ENCODE measurements at regions of chr19 and their contacts with region 1.

Region 1: DNA sequence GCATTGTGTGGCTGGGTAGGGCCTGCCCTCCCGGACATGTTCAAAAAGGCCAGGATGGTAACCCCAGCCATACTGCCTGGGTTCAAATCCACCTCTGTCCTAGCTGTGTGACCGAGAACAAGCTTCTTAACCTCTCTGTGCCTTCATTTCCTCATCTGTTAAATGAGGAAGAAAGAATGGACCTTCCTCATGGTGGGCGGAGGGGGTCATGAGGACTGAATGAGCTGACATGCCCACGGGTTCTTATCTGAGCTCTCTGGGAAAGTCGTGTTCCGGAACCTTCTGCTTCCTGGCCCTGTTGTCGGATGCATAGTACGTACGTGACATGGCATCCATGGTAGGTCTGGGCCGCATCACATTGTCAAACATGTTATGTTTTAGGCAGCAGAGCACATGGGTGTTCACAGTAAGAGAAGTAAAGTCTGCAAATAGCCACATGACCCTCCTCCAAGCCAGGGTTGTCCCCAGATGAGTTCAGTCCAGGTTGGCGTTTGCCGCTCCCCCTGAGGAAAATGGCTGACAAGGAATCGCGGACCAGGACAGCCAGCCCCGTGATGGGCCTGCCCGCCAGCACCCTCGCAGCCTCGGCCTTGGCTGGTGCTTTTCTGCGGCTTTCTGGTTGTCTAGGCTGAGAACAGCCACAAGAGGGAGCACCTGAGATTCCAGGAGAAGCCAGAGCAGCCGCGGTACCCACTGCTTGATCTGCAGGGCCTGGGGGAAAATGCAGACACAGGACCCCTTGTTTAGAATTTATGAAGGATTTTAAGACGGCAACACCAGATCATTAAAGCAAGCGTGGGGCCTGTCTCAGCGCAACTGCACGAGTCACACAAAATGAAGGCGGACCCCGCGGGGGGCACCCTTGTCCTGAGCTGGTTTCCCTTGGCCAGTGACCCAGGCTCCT is 2.4 kb upstream of the NTN5 start:
- DNase-seq: peak; percentile 71 to 72
- H3K4me3 ChIP-seq: no peak overlapping the region
- H3K27ac ChIP-seq: no peak overlapping the region
- H3K4me1 ChIP-seq: peaks cover 32% of the 10 kb centered on the region
- H3K27me3 ChIP-seq: no peaks in the 10 kb centered on the region
- CTCF ChIP-seq: peak; percentile 92

Region 2: DNA sequence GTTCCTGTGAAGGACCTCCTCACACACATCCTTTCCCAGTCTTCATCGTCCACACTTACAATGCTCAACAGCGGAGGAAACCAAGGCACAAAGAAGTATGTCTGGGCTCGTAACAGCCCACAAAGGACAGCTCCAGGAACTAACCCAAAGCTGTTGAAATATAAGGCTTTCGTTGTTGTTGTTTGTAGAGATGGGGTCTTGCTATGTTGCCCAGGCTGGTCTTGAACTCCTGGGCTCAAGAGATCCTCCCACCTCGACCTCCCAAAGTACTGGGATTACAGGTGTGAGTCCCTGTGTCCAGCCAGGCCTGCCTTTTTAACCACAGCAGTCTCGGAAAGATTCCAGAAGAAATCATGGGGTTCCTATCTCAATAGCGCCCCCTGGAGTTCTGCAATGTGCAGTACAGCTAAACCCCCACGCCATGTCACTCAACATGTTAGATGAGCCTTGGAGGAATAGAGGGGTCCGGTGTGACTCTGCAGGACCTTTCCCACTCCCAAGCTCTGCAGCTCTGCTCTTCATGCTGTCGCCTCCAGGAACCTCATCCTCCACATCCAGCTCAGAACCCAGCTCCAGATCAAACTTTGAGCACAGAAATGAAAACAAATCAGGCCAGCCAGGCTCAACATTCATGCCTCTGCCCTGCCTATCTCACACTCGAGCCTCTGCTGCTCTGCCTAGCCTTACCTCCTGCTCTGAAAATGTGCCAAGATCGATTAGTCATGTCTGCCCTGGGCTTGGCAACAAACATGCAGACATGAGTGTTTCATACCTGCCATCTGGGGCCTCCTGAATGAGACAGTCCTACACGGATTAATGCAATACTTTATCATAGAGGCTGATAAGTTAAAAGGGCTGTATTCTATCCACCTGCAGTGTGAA is 572.1 kb before region 1 on chr19:
- CTCF ChIA-PET with region 1: no interaction called
- POLR2A ChIA-PET with region 1: no interaction called
- intact Hi-C with region 1: no loop called
- DNase-seq: peak; percentile 31 to 61
- H3K4me3 ChIP-seq: no peak overlapping the region
- H3K27ac ChIP-seq: no peak overlapping the region
- H3K4me1 ChIP-seq: no peaks in the 10 kb centered on the region
- H3K27me3 ChIP-seq: no peaks in the 10 kb centered on the region; the same call in 1 of the 2 replicates
- CTCF ChIP-seq: peak; percentile 93

Region 3: DNA sequence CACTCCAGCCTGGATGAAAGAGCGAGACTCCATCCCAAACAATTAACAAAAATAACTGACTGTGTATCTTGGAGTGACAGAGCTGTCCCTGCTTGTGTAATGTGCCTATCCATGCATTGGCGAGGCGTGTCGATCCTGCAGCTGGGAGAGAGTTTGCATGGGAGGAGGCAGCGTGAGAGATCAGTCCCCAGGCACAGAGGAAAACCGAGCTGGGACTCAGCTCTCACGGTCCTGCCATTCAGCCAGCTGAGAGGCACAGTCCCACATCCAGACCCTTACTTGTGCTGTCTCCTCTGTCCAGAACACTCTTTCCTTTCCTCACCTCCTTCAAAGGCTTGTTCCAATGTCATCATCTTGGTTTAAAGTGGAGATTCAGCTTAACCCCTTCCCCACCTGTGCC is 135.1 kb before region 1 on chr19:
- CTCF ChIA-PET with region 1: no interaction called
- POLR2A ChIA-PET with region 1: no interaction called
- intact Hi-C with region 1: no loop called
- DNase-seq: no peak
- H3K4me3 ChIP-seq: no peak overlapping the region
- H3K27ac ChIP-seq: no peak overlapping the region
- H3K4me1 ChIP-seq: peaks cover 22% of the 10 kb centered on the region
- H3K27me3 ChIP-seq: no peaks in the 10 kb centered on the region
- CTCF ChIP-seq: no peak

Region 4: DNA sequence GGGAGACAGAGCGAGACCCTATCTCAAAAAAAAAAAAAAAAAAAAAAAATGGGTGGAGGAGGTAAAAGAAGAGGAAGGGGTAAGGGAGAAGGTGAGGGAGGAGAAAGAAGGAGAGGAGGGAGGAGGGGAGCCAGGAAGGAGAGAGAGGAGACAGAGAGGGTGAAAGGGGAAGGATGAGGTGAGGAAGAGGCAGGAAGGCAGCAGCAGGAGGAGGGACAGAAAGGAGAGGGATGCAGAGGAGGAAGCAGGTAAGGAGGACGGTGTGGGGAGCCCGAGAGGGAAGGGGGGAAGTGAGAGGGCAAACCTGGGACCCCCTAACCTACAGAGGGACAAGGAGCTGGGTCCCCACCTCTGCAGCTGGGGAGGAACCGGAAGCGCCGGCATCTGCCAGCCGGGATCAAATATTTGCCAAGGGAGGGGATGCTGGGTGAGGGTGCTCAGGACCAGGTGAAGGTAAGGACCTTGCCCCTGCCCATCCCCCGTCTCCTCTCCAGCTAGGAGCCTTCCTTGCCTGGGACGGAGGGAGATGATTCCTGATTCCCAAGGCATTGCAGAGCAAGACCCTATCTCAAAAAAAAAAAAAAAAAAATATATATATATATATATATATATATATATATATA is 72.9 kb before region 1 on chr19:
- CTCF ChIA-PET with region 1: no interaction called
- POLR2A ChIA-PET with region 1: interaction called, 10 read pairs
- intact Hi-C with region 1: no loop called
- DNase-seq: peak in 1 of 2 experiments; percentile 8
- H3K4me3 ChIP-seq: no peak overlapping the region
- H3K27ac ChIP-seq: no peak overlapping the region
- H3K4me1 ChIP-seq: 0 out of 2 replicates have a peak, but pooled peaks cover 5% of the 10 kb centered on the region
- H3K27me3 ChIP-seq: no peaks in the 10 kb centered on the region
- CTCF ChIP-seq: no peak

Region 5: DNA sequence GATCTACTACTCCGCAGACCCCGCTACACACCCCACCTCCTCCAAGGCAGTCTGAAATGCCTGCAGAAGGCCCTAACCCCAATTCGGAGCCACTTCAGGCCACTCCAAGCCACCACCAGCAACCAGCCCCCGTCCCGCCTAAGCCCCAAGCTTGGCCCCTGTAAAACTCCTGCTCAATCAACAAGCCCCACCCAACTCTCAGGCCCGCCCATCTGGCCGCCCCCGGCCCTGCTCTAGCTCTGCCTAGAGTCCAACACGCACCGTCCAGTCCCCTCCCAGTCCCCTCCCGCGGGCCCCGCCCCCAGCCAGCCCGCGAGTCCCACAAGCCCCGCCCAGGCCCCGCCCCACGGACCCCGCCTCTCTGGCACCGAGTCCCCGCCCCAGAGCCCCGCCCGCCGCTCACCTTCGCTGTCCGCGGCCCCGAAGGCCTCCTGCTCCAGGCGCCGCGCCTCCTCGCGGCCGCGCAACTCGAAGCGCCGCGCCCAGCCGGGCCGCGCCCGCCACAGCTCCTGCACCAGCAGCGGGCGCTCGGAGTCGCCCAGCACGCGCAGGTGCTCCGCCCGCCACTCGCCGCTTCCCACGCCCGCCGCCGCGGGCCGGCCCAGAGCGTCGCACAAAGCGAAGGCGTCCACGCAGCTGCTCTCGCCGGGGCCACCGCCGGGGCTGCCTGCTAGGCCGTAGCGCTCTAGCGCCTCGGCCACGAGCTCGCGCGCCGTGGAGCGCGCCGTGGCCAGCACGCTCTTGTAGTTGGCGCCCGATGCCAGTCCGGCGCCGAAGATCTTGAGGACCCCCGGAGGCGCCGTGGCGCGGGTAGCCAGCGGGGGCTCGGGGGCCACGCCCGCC is 63.6 kb after region 1 on chr19:
- CTCF ChIA-PET with region 1: interaction called, 4 read pairs
- POLR2A ChIA-PET with region 1: interaction called, 3 read pairs
- intact Hi-C with region 1: loop called (anchors 5 kb)
- DNase-seq: peak; percentile 74 to 96
- H3K4me3 ChIP-seq: peak overlapping the region; percentile 58; the same call in 1 of the 2 replicates
- H3K27ac ChIP-seq: no peak overlapping the region
- H3K4me1 ChIP-seq: no peaks in the 10 kb centered on the region; the same call in 1 of the 2 replicates
- H3K27me3 ChIP-seq: no peaks in the 10 kb centered on the region
- CTCF ChIP-seq: no peak

Region 6: DNA sequence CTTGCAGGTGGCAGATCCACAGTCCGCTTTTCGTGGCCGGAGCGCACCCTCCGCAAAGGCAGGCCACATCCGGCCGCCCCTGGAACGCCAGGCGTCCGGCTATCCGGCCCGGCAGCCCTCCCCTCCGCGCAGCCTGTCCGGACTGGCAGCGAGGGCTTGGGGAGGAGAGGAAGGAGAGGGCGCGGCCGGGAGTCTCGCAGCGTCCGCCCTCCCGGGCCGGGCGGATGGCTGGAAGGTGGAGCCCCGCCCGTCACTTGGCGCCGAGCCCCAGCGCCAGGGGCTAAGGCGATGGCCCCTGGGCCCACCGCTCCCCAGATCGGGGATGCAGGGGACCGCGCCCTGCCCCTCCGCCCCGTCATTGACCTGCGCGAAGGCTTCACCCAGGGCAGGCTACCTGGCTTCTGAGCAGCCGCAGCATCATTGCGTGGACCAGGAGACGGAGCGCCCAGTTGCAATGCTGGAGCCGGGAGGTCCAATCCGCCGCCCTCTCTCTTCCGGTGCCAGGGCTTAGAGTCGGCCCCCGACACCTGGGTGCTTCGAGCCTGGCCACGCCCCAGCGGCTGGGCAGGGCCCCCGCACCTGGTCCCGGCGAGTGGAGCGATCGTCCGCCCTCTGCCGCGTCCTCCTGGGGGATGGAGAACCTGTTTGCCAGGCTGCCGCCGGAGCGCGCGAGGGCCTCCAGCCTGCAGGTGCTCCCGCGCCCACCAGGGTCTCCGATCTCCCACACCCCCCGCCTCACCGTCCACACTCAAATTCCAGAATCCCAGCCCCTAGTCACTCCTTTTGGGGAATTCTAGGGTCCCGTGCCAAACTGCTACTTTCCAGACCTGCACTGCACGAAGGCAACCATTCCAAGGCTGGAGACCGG is 77.6 kb after region 1 on chr19 and contains the start of gene FUT1:
- CTCF ChIA-PET with region 1: no interaction called
- POLR2A ChIA-PET with region 1: no interaction called
- intact Hi-C with region 1: loop called (anchors 1 kb)
- DNase-seq: peak; percentile 95 to 98
- H3K4me3 ChIP-seq: peak within 1 kb of the TSS; percentile 78
- H3K27ac ChIP-seq: peak within 1 kb of the TSS; percentile 66
- H3K4me1 ChIP-seq: peaks cover 41% of the 10 kb centered on the region
- H3K27me3 ChIP-seq: no peaks in the 10 kb centered on the region
- CTCF ChIP-seq: peak; percentile 66
- total RNA-seq, gene FUT1: 7.9 and 9.6 TPM in 2 replicates

Measured in PC-9 (cell line).